Mammary epithelial cell (primary cell): ENCODE measurements at regions of chr3 and their contacts with region 1.

Region 1: GRCh38 chr3:38136777-38137614 is at the start of gene ACAA1:
- DNase-seq: peak; percentile 99
- H3K4me3 ChIP-seq: peak within 1 kb of the TSS; percentile 55 to 86 (median 84)
- H3K27ac ChIP-seq: peak within 1 kb of the TSS; percentile 71
- H3K4me1 ChIP-seq: peaks cover 47% of the 10 kb centered on the region
- H3K27me3 ChIP-seq: no peaks in the 10 kb centered on the region
- CTCF ChIP-seq: peak in 1 of 2 donors; percentile 1
- total RNA-seq, gene ACAA1: 24.8 to 62.4 TPM

Region 2: DNA sequence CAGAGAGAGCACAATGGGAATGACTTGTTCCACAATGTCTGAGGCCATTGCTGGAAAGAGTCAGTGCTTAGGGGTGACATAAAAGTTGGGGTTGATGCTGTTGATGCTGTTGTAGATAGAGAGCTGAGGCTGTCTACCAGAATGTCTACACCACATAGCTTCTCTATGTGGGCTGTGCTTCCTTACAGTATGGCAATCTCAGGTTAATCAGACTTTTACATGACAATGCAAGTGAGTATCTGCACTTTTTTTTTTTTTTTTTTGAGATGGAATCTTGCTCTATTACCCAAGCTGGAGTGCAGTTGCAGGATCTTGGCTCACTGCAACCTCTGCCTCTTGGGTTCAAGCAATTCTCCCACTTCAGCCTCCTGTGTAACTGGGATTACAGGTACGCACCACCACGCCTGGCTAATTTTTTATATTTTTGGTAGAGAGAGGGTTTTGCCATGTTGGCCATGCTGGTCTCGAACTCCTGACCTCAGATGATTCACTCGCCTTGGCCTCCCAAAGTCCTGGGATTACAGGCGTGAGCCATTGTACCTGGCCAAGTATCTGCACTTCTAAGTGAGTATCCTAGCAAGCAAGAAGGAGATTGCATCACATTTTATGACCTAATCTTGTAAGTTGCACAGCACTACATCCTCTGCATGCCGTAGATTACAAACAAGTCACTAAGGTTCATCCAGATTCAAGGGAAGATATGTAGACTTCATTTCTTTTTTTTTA is 69.3 kb before region 1 on chr3:
- CTCF ChIA-PET with region 1: no interaction called
- dilution Hi-C with region 1: no loop called
- in situ Hi-C with region 1: no loop called
- intact Hi-C with region 1: no loop called
- DNase-seq: peak; percentile 35
- H3K4me3 ChIP-seq: no peak overlapping the region
- H3K27ac ChIP-seq: no peak overlapping the region
- H3K4me1 ChIP-seq: no peaks in the 10 kb centered on the region
- H3K27me3 ChIP-seq: no peaks in the 10 kb centered on the region
- CTCF ChIP-seq: no peak

Region 3: GRCh38 chr3:38164966-38165680 is 28.1 kb after region 1 on chr3 and contains the start of gene OXSR1:
- CTCF ChIA-PET with region 1: no interaction called
- dilution Hi-C with region 1: no loop called
- in situ Hi-C with region 1: no loop called
- intact Hi-C with region 1: loop called (anchors 1 kb)
- DNase-seq: peak; percentile 100
- H3K4me3 ChIP-seq: peak within 1 kb of the TSS; percentile 70 to 96 (median 83)
- H3K27ac ChIP-seq: peak within 1 kb of the TSS; percentile 99
- H3K4me1 ChIP-seq: peaks cover 31% of the 10 kb centered on the region
- H3K27me3 ChIP-seq: no peaks in the 10 kb centered on the region
- CTCF ChIP-seq: no peak
- total RNA-seq, gene OXSR1: 48.3 to 70.6 TPM

Region 4: GRCh38 chr3:38227989-38228388 is 91.0 kb after region 1 on chr3:
- CTCF ChIA-PET with region 1: no interaction called
- dilution Hi-C with region 1: no loop called
- in situ Hi-C with region 1: no loop called
- intact Hi-C with region 1: loop called (anchors 5 kb)
- DNase-seq: peak; percentile 47
- H3K4me3 ChIP-seq: no peak overlapping the region
- H3K27ac ChIP-seq: peak overlapping the region; percentile 40
- H3K4me1 ChIP-seq: peaks cover 24% of the 10 kb centered on the region
- H3K27me3 ChIP-seq: no peaks in the 10 kb centered on the region
- CTCF ChIP-seq: no peak

Region 5: DNA sequence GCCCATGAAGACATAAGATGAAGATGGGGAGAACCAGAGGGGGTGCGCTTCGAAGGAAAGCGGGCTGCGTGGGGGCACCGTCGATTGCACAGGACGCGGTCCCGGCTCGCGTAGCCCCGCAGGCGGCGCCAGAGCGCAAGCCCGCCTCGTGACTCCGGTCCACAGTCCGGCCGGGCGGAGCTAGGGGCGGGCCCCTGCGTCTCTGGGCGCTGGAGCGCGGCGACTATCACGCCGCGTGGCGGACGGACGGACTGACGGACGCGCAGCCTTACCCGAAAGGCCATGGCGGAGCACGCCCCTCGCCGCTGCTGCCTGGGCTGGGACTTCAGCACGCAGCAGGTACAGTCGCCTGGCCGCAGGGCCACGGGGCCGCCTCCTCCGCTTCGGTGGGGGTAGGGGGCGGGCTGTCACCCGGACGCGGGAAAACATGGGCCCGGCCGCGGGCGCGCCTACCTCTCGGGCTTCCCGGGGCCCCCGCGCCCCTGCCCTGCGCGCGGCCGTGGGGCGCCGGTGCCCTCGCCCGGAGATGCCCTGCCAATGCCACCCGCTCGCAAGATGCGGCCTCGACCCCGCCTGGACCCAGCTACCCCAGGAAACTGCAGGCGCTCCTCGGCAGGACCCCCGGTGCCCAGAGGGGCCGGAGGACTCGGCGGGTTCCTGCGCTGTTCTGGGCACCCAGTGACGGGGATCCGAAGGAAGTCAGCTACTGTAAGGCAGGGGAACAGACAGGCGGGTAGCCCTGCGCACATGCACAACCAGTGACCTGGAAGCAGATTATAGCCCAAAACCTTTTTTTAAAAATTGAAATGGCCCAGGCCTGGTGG is 209.8 kb after region 1 on chr3 and contains the start of gene XYLB:
- CTCF ChIA-PET with region 1: interaction called, 4 read pairs
- dilution Hi-C with region 1: no loop called
- in situ Hi-C with region 1: no loop called
- intact Hi-C with region 1: loop called (anchors 5 kb)
- DNase-seq: peak; percentile 75
- H3K4me3 ChIP-seq: peak within 1 kb of the TSS; percentile 76 to 91 (median 90)
- H3K27ac ChIP-seq: no peak within 1 kb of the TSS
- H3K4me1 ChIP-seq: peaks cover 4% of the 10 kb centered on the region
- H3K27me3 ChIP-seq: no peaks in the 10 kb centered on the region
- CTCF ChIP-seq: peak; percentile 59 to 88
- total RNA-seq, gene XYLB: 3.0 to 4.5 TPM